K562 (cell line): ENCODE measurements at regions of chr3 and their contacts with region 1.

Region 1: GRCh38 chr3:112979240-112979832 is 4.4 kb upstream of the CD200R1 start:
- DNase-seq: peak; percentile 7 to 31 (median 10)
- ATAC-seq: no peak
- H3K4me3 ChIP-seq: no peak overlapping the region
- H3K27ac ChIP-seq: no peak overlapping the region
- H3K4me1 ChIP-seq: no peaks in the 10 kb centered on the region
- H3K27me3 ChIP-seq: no peaks in the 10 kb centered on the region
- CTCF ChIP-seq: peak in 2 of 3 experiments; percentile 36 to 53; a peak in 3 of 6 replicates
- EP300 ChIP-seq: no peak
- POLR2A ChIP-seq: no peak
- RAD21 ChIP-seq: peak; percentile 60 to 72

Region 2: DNA sequence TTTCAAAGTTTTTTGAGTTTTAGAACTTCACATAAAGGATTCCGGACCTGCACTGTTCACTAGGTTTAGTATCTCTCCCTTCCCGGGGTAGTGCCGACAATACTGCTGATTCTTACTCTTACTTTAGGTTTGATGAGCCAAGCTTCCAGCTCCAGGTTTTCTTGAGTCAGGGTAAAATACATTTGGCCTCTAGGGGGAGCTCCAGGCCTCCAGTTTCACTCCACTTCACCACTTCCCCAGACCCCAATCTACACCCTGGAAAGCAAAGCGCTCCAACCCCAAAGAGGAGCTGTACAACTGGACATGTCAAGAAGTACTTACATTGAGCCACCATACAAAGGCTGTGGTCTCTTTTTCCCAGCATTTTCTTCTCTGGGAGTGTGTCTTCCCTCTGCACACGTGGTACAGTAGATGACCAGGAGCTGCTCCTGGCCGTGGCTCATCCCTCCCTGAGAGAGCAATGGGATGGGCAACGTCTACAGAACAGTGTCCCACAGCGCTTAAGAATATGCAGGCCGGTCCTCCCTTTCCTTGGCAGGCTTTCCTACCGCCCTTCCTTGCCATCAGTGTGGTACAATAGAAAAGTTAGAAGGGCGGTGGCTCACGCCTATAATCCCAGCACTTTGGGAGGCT is 244.5 kb before region 1 on chr3:
- CTCF ChIA-PET with region 1: interaction called, 3 read pairs
- POLR2A ChIA-PET with region 1: no interaction called
- in situ Hi-C with region 1: loop called (anchors 5 kb)
- intact Hi-C with region 1: loop called (anchors 1 kb)
- DNase-seq: peak; percentile 37 to 73 (median 49)
- ATAC-seq: peak; percentile 93
- H3K4me3 ChIP-seq: no peak overlapping the region
- H3K27ac ChIP-seq: no peak overlapping the region
- H3K4me1 ChIP-seq: peaks cover 0 to 4% of the 10 kb centered on the region in 2 experiments; a peak in 1 of 5 replicates
- H3K27me3 ChIP-seq: no peaks in the 10 kb centered on the region
- CTCF ChIP-seq: peak; percentile 53 to 75 (median 65)
- EP300 ChIP-seq: no peak
- POLR2A ChIP-seq: no peak
- RAD21 ChIP-seq: peak; percentile 72 to 79

Region 3: DNA sequence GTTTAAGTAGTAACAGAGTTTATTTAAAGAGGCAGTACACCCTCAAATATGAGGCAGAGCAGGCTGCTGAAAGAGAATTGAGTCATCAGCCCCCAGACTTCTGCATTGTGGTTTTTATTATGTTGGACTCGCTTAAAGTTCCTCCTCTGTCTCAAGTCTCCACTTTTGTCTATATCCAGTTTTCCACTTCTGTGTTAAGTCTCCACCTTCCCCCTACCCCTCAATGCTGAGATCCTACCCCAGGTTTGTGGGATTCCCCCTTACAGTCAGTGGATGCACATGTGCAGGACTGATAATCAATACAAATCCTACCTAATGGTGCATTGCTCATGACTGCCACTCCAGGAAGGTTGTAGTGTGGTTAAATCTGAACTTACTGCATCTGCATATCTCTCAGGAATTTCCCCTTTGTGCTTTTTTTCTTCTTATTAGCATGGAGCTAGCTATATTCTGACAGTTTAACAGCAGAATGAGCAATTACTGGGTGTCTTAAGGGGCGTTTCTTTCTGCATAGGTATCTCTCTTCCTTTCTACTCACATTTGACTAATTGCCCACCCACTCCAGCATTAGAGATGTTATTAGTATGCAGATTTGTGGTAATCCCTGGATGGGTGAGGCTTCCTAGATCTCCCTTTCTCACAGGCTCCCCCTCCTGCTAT is 120.8 kb before region 1 on chr3:
- CTCF ChIA-PET with region 1: no interaction called
- POLR2A ChIA-PET with region 1: no interaction called
- in situ Hi-C with region 1: no loop called
- intact Hi-C with region 1: loop called (anchors 10 kb)
- DNase-seq: peak in 1 of 4 experiments; percentile 1
- ATAC-seq: no peak
- H3K4me3 ChIP-seq: no peak overlapping the region
- H3K27ac ChIP-seq: no peak overlapping the region
- H3K4me1 ChIP-seq: peaks cover 0 to 9% of the 10 kb centered on the region in 2 experiments; a peak in 1 of 5 replicates
- H3K27me3 ChIP-seq: no peaks in the 10 kb centered on the region
- CTCF ChIP-seq: no peak
- EP300 ChIP-seq: no peak
- POLR2A ChIP-seq: no peak
- RAD21 ChIP-seq: no peak

Region 4: DNA sequence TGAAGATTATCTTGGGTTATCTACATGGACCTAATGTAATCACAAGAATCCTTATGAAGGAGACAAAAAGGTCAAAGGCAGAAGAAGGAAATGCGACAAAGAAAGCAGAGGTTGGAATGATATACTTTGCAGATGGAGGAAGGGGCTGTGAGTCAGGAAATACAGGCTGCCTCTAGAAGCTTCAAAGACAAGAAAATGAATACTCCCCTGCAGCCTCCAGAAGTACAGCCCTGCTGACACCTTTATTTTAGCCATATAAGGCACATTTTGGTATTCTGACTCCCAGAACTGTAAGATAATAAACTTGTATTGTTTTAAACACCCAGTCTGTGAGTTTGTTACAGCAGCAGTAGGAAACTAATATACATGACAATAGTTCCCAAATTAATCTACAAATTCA is 611.6 kb after region 1 on chr3:
- CTCF ChIA-PET with region 1: no interaction called
- POLR2A ChIA-PET with region 1: no interaction called
- in situ Hi-C with region 1: no loop called
- intact Hi-C with region 1: no loop called
- DNase-seq: no peak
- ATAC-seq: no peak
- H3K4me3 ChIP-seq: no peak overlapping the region
- H3K27ac ChIP-seq: no peak overlapping the region
- H3K4me1 ChIP-seq: no peaks in the 10 kb centered on the region
- H3K27me3 ChIP-seq: no peaks in the 10 kb centered on the region; a peak in 1 of 5 replicates
- CTCF ChIP-seq: no peak
- EP300 ChIP-seq: no peak
- POLR2A ChIP-seq: no peak
- RAD21 ChIP-seq: no peak